ENCODE measurements at regions of chr1 and their contacts with region 1.

Region 1: GRCh38 chr1:153967082-153968000 is at the start of gene CREB3L4:
- DNase-seq: peak; percentile 97
- ATAC-seq: peak; percentile 86
- H3K4me3 ChIP-seq: peak within 1 kb of the TSS; percentile 62 to 82 (median 72)
- H3K27ac ChIP-seq: peak within 1 kb of the TSS; percentile 83
- H3K4me1 ChIP-seq: peaks cover 30% of the 10 kb centered on the region
- H3K27me3 ChIP-seq: no peaks in the 10 kb centered on the region; a peak in 1 of 5 replicates
- CTCF ChIP-seq: peak; percentile 81
- EP300 ChIP-seq: 0 out of 4 replicates have a peak, but pooled peaks of 1 of the 2 experiments have one; percentile 17
- POLR2A ChIP-seq: peak; percentile 93 to 96
- RAD21 ChIP-seq: peak; percentile 63; the same call in 1 of the 2 replicates
- total RNA-seq, gene CREB3L4: 7.8 and 9.9 TPM in 2 replicates

Region 2: GRCh38 chr1:153796791-153797659 is 170.3 kb before region 1 on chr1:
- CTCF ChIA-PET with region 1: no interaction called
- POLR2A ChIA-PET with region 1: no interaction called
- in situ Hi-C with region 1: no loop called
- intact Hi-C with region 1: loop called (anchors 5 kb)
- DNase-seq: peak; percentile 65
- ATAC-seq: peak; percentile 66
- H3K4me3 ChIP-seq: no peak overlapping the region
- H3K27ac ChIP-seq: no peak overlapping the region
- H3K4me1 ChIP-seq: peaks cover 39% of the 10 kb centered on the region
- H3K27me3 ChIP-seq: peaks cover 7 to 45% of the 10 kb centered on the region in 2 experiments; a peak in 4 of 5 replicates
- CTCF ChIP-seq: peak; percentile 84
- EP300 ChIP-seq: no peak
- POLR2A ChIP-seq: no peak
- RAD21 ChIP-seq: peak; percentile 67

Region 3: DNA sequence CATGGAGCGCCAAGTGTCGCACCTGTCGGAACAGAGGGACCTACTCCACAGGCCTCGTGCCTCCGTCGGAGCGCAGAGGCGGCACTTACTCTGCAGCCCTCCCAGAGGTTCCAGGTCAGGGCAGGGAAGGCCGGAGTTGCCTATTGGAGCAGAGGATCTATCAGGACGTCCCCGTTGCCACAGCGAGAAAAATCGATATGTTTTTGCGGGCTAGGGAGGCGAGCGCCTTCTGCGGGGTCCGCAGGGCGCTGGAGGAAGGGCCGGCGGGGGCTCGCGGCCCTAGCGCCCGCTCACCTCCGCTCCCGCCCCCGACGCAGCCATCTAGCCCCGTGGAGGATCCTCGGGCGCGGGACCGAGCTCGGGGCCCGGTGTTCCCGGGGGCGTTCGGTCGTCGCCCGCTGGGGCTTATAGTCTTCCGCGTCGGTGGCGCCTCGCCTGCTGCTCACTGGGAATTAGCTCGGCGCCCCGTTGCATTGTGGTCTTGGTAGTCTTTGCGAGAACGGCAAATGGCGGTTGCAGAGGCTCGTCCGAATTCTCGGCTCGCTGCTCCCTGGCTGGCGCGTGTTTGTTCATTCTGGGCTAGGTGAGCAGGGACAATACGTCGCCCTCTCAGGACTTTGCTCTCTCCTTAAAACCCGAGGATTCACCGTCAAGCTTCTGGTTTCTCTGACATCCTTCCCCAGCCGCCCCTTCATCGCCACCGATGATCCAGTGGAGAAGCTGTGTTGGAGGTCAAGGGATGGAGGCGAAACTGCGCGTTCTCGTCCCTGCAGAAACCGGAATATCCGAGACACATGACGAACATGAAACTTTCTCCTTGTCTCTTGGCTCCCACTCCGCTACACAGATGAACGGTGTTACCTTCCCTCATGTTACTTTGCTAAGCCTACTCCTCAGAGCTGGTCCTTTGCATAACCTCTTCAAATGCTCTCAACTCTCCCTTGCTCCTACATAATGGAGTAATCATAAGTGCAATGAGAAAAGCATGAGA is 10.2 kb after region 1 on chr1 and contains the start of gene JTB:
- CTCF ChIA-PET with region 1: no interaction called
- POLR2A ChIA-PET with region 1: interaction called, 209 read pairs
- in situ Hi-C with region 1: no loop called
- intact Hi-C with region 1: no loop called
- DNase-seq: peak; percentile 83
- ATAC-seq: peak; percentile 94
- H3K4me3 ChIP-seq: peak within 1 kb of the TSS; percentile 72 to 79 (median 77)
- H3K27ac ChIP-seq: peak within 1 kb of the TSS; percentile 88
- H3K4me1 ChIP-seq: peaks cover 25% of the 10 kb centered on the region
- H3K27me3 ChIP-seq: no peaks in the 10 kb centered on the region
- CTCF ChIP-seq: no peak; the same call in 1 of the 2 replicates
- EP300 ChIP-seq: no peak
- POLR2A ChIP-seq: peak; percentile 86 to 88
- RAD21 ChIP-seq: 0 out of 2 replicates have a peak, but pooled peaks have one; percentile 30
- total RNA-seq, gene JTB: 66.8 and 99.2 TPM in 2 replicates

Region 4: GRCh38 chr1:154091706-154092105 is 124.4 kb after region 1 on chr1:
- CTCF ChIA-PET with region 1: no interaction called
- POLR2A ChIA-PET with region 1: no interaction called
- in situ Hi-C with region 1: no loop called
- intact Hi-C with region 1: no loop called
- DNase-seq: no peak
- ATAC-seq: no peak
- H3K4me3 ChIP-seq: no peak overlapping the region
- H3K27ac ChIP-seq: no peak overlapping the region
- H3K4me1 ChIP-seq: no peaks in the 10 kb centered on the region
- H3K27me3 ChIP-seq: no peaks in the 10 kb centered on the region; a peak in 1 of 5 replicates
- CTCF ChIP-seq: no peak
- EP300 ChIP-seq: no peak
- POLR2A ChIP-seq: no peak
- RAD21 ChIP-seq: no peak

Region 5: DNA sequence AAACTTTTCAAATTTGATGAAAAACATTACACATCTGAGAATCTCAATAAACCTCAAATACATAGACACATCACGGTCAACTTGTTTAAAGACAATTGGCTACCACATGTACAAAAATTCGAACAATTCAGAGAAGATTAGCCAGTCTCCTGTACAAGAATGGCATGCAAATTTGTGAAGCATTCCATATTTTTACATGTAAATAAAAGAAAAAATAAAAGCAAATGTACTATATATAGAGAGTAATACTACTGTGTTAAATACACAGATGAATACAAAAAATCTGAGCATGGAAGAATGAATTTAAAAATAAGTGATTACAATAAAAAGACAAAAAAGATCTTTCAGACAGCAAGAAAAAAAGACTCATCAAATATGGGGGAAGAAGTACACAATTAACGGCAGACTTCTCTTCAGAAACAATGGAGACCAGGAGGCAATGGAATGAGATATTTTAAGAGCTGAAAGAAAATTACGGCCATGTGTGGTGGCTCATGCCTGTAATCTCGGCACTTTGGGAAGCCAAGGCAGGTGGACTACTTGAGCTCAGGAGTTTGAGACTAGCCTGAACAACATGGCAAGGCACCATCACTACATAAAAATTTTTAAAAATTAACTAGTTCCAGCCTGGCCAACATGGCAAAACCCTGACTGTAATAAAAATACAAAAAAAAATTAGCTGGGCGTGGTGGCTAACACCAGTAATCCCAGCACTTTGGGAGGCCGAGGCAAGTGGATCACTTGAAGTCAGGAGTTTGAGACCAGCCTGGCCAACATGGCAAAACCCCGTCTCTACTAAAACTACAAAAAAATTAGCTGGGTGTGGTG is 328.3 kb after region 1 on chr1:
- CTCF ChIA-PET with region 1: no interaction called
- POLR2A ChIA-PET with region 1: no interaction called
- in situ Hi-C with region 1: no loop called
- intact Hi-C with region 1: no loop called
- DNase-seq: no peak
- ATAC-seq: no peak
- H3K4me3 ChIP-seq: no peak overlapping the region
- H3K27ac ChIP-seq: no peak overlapping the region
- H3K4me1 ChIP-seq: no peaks in the 10 kb centered on the region
- H3K27me3 ChIP-seq: 0 out of 5 replicates have a peak, but pooled peaks cover 0 to 3% of the 10 kb centered on the region in 2 experiments
- CTCF ChIP-seq: no peak
- EP300 ChIP-seq: no peak
- POLR2A ChIP-seq: no peak
- RAD21 ChIP-seq: no peak